ENCODE measurements at regions of chr10 and their contacts with region 1.

Region 1: DNA sequence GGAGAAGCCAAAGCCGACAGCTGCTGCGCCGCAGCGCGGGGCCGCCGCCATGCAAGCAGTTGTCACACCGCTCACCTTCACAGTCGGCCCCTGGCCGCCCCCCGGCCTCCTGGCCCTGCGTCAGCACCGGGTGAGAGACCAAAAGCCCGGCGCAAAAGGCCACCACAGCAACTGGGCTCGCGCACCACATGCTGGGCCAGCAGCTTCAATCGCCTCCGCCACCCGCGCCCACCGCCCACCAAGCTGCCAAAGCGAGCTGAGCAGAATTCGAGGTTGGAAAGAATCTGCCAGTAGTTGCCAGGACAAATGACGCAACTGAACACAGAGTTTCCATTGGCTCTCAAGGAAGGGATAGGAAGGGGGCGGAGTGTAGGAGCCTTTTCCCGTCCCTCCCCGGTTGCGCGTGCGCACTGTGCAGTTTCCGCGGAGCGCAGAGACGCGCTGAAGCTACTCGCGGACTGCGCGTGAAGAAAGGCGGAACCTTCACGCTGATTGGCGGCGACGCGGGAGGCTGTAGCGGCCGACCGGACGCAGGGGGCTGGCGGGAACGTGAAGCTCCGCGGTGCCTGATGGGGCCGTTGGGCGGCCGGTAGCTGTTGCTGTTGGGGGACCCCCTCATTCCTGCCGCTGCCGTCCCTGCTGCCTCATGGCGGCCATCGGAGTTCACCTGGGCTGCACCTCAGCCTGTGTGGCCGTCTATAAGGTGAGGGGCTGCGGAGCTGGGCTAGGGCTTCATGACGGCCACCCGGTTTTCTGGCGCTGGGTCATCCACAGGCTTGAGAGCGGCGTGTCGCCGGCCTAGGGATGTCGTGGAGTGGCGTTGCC is at the starts of genes CDNF, HSPA14 and MSANTD7:
- DNase-seq: peak; percentile 99 to 100
- ATAC-seq: peak; percentile 95 to 98 (median 96)
- H3K4me3 ChIP-seq: peak within 1 kb of the TSS; percentile 79
- H3K27ac ChIP-seq: peak within 1 kb of the TSS; percentile 97
- H3K4me1 ChIP-seq: peaks cover 18% of the 10 kb centered on the region
- H3K27me3 ChIP-seq: no peaks in the 10 kb centered on the region
- CTCF ChIP-seq: no peak
- total RNA-seq, gene CDNF: 15.4 to 23.5 (median 18.9) TPM
- total RNA-seq, gene HSPA14: 5.5 to 20.8 (median 14.0) TPM
- total RNA-seq, gene MSANTD7: 4.0 to 7.0 (median 5.8) TPM

Region 2: GRCh38 chr10:14604181-14605142 is 233.5 kb before region 1 on chr10:
- intact Hi-C with region 1: loop called in 1 of 2 experiments (anchors 5 kb)
- DNase-seq: peak; percentile 83 to 89
- ATAC-seq: peak; percentile 94 to 98 (median 98)
- H3K4me3 ChIP-seq: peak overlapping the region; percentile 71
- H3K27ac ChIP-seq: peak overlapping the region; percentile 5
- H3K4me1 ChIP-seq: peaks cover 6% of the 10 kb centered on the region
- H3K27me3 ChIP-seq: no peaks in the 10 kb centered on the region
- CTCF ChIP-seq: no peak

Region 3: DNA sequence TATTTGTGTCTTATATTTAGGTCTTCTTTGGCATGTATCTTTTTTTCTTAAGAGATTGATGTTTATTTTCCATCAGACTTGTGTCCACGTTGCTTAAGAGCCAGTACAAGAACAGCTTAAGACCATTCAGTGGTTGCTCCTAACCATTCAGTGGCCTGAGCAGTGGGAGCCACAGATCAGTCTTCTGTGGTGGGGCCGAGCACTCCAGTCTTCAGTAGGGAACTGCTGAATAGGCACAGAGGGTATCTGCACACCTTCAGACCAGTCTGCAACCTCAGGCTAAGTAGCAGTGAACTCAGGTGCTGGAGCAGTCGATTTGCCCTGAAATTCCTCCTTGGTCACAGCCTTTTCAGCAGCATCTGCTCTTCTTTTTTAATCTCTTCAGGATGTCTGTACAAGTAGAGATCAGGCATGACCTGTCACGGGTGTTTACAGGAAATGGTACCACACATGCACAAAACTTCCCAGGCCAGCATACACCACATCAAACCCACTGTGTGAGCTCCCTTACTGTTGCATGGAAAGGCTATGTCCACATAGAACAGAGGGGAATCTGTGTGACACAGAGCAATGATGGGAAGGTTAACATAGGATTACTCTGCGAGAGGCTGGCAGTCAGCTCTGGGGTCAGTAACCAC is 114.8 kb before region 1 on chr10:
- intact Hi-C with region 1: no loop called
- DNase-seq: no peak
- ATAC-seq: no peak
- H3K4me3 ChIP-seq: no peak overlapping the region
- H3K27ac ChIP-seq: no peak overlapping the region
- H3K4me1 ChIP-seq: no peaks in the 10 kb centered on the region
- H3K27me3 ChIP-seq: no peaks in the 10 kb centered on the region
- CTCF ChIP-seq: no peak

Region 4: DNA sequence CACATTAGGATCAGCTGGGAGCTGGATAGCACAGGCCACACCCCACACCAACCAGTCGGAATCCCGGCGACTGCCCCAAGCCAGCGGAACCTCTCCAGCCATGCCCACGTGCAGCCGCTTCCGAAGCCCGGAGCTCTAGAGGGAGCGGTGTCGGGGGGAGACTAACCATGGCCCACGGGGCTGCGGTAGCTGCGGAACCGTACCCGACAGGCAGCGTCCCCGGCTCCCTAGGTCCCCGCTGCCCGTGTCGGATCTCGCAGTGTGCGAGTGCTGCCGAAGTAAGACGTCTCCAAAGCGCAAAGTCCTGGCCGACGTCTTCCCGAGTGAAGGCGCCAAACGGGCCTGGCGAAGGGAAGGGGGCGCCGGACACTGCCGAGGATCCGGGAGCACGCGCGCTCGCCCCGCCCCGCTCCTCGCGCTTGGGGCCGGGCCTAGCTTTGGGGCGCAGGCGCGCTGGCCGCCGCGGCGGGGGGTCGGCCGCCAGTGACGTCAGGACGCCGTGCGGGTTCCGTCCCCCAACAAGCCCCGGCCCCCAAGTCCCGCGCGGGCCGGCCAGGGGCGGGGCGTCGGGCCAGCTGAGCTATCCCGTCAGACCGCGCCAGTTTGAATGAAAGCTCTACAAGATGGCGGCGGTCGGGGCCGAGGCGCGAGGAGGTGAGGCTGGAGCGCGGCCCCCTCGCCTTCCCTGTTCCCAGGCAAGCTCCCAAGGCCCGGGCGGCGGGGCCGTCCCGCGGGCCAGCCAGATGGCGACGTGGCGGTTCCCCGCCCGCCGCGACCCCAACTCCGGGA is 40.5 kb after region 1 on chr10 and contains the start of gene SUV39H2:
- intact Hi-C with region 1: loop called (anchors 1 to 2 kb)
- DNase-seq: peak; percentile 97 to 98
- ATAC-seq: peak; percentile 92 to 97 (median 94)
- H3K4me3 ChIP-seq: peak within 1 kb of the TSS; percentile 88
- H3K27ac ChIP-seq: peak within 1 kb of the TSS; percentile 99
- H3K4me1 ChIP-seq: peaks cover 38% of the 10 kb centered on the region
- H3K27me3 ChIP-seq: no peaks in the 10 kb centered on the region
- CTCF ChIP-seq: no peak
- total RNA-seq, gene SUV39H2: 4.4 to 7.9 (median 6.2) TPM

Region 5: DNA sequence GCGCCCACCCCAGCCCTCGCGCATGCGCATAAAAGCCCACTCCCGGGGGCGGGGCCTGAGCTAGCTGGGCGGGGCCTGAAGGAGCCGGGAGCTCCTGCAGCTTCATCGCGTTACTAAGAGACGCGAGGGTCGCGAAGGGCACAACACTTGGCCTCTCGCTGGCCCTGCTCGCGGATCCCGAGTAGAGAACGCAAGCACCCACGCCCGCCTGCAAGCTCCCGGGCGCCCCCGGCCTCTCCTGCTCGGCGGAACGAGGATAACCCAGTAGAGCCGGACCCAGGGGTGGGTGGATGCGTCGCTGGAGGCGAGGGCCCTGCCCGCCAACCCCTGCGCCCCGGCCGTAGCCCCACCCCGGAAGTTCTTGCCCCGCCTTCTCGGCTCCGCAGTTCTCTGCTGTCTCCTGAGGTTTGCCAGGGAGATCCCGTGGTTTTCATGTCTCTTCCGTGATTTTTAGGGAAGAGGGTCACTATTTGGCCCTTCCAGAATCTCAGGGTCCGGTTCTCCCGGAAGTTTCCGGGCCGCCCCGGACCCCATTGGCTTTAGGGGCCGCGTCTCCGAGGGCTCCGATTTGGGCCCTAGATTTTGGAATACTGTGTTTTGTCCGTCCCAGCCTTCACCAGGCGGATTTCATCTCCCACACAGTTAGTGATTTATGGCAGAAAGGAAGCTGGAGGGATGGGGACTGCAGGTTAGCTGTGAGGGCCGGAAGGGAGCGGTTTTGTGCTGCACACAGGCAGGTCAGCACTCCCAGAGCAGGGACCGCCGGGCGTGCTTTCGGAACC is 121.5 kb after region 1 on chr10 and contains the start of gene MEIG1:
- intact Hi-C with region 1: loop called in 1 of 2 experiments (anchors 2 kb)
- DNase-seq: peak; percentile 92 to 96
- ATAC-seq: peak; percentile 96 to 97 (median 96)
- H3K4me3 ChIP-seq: peak within 1 kb of the TSS; percentile 96
- H3K27ac ChIP-seq: peak within 1 kb of the TSS; percentile 97
- H3K4me1 ChIP-seq: no peaks in the 10 kb centered on the region
- H3K27me3 ChIP-seq: no peaks in the 10 kb centered on the region
- CTCF ChIP-seq: no peak
- total RNA-seq, gene MEIG1: not detected

Measured in psoas muscle (tissue), 8 donors.